ENCODE measurements at regions of chr9 and their contacts with region 1.

Region 1: GRCh38 chr9:122897969-122898368 is 7.2 kb downstream of the RC3H2 start:
- DNase-seq: peak; percentile 15
- H3K4me3 Mint-ChIP-seq: no peak overlapping the region
- H3K27ac Mint-ChIP-seq: peak overlapping the region; percentile 74
- H3K4me1 Mint-ChIP-seq: peaks cover 15% of the 10 kb centered on the region
- H3K27me3 Mint-ChIP-seq: no peaks in the 10 kb centered on the region
- CTCF ChIP-seq: no peak

Region 2: DNA sequence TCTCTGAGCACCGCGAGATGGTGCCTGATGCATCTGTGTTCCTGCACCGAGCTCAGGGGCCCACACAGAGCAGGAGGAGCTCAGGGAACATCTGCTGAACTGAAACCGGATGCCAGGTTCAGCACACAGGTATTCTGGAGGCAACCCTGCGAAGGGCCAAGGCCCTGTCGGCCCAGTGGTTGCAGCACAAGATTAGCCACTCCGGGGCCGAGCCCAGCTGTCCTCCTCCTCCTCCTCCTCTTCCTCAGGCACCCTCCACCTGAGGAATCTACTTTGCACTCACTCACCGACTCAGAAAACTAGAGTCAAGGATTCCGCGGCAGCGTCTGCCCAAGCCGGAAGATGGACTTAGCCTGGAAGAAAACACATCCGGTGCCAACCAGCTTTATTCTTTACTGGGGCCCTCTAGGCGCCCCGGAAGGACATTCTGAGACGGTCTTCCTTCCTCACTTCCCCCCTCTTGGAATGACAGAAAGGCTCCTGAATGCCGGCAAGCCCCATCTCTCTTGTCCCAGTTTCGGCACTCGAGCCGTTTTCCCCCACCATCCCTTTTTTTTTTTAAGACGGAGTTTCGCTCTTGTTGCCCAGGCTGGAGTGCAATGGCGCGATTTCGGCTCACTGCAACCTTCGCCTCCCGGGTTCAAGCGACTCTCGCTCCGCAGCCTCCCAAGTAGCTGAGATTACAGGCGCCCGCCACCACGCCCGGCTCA is 15.2 kb after region 1 on chr9 and contains the start of gene ZBTB6:
- CTCF ChIA-PET with region 1: no interaction called
- POLR2A ChIA-PET with region 1: interaction called, 98 read pairs
- intact Hi-C with region 1: no loop called
- DNase-seq: peak; percentile 89
- H3K4me3 Mint-ChIP-seq: peak within 1 kb of the TSS; percentile 97
- H3K27ac Mint-ChIP-seq: peak within 1 kb of the TSS; percentile 94
- H3K4me1 Mint-ChIP-seq: peaks cover 17% of the 10 kb centered on the region
- H3K27me3 Mint-ChIP-seq: no peaks in the 10 kb centered on the region
- CTCF ChIP-seq: no peak
- total RNA-seq, gene ZBTB6: 8.5 and 10.4 TPM in 2 replicates

Region 3: DNA sequence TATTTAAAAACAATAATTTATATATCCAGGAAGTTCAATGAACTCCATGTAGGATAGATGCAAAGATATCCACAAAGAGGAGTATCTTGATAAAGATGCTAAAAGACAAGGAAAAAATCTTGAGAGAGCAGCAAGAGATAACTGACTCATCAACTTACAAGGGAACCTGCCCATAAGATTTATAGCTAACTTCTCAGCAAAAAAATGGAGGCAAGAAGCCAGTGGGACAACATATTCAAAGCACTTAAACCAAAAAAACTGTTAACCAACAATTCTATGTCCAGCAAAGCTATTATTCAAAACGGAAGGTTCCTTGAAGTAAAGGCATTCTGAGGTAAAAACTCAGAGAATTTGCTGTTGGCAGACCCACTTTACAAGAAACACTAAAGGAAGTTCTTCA is 63.2 kb after region 1 on chr9:
- CTCF ChIA-PET with region 1: no interaction called
- POLR2A ChIA-PET with region 1: no interaction called
- intact Hi-C with region 1: no loop called
- DNase-seq: no peak
- H3K4me3 Mint-ChIP-seq: no peak overlapping the region
- H3K27ac Mint-ChIP-seq: no peak overlapping the region
- H3K4me1 Mint-ChIP-seq: no peaks in the 10 kb centered on the region
- H3K27me3 Mint-ChIP-seq: no peaks in the 10 kb centered on the region
- CTCF ChIP-seq: no peak

Measured in MCF 10A (cell line).